GM12878 (cell line): ENCODE measurements at regions of chr6 and their contacts with region 1.

Region 1: DNA sequence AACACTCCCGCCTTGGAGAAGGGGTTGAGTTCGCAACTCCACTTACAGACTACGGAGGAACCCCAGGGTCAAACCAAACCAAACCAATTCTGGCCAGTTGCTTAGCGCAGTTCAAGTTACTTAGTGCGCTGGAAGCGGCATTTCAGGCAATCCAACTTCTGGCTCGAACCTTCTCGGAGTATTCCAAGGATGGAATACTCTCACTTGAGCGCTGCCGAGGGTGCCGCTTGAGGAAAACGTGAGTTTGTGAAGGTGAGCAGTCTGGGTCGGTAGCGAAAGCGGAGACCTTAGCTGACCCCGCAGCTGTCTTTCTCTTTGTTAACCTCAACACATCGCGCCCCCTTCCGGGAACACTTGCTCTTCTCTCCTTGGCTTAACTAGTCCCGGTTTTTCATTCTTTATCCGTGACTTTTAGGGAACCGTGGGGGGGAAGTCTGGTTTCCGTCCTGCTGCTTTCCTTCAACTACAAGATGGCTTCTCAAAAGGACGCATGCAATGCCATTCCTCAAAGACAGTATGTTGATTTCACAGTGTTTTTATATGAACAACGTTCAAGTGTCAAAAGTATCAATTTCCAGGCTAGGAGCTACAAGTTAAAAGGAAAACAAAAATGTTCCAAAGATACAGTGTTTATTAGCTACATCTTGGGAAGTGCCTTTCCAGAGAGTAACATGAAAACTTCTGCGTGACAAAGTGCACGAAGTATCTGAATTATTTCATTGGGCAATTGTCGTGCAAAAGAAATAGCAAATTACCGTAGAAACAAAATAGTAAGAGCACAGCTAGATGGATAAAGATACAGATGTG is 742 bp upstream of the PNISR start:
- DNase-seq: no peak
- ATAC-seq: peak; percentile 57
- H3K4me3 ChIP-seq: peak overlapping the region; percentile 94
- H3K27ac ChIP-seq: peak overlapping the region; percentile 95
- H3K4me1 ChIP-seq: peaks cover 15% of the 10 kb centered on the region
- H3K27me3 ChIP-seq: no peaks in the 10 kb centered on the region
- CTCF ChIP-seq: peak; percentile 44 to 49 (median 48); a peak in 4 of 6 replicates
- EP300 ChIP-seq: peak in 1 of 2 experiments; percentile 13; a peak in 1 of 4 replicates
- POLR2A ChIP-seq: no peak; the same call in 1 of the 2 replicates
- RAD21 ChIP-seq: peak; percentile 53

Region 2: DNA sequence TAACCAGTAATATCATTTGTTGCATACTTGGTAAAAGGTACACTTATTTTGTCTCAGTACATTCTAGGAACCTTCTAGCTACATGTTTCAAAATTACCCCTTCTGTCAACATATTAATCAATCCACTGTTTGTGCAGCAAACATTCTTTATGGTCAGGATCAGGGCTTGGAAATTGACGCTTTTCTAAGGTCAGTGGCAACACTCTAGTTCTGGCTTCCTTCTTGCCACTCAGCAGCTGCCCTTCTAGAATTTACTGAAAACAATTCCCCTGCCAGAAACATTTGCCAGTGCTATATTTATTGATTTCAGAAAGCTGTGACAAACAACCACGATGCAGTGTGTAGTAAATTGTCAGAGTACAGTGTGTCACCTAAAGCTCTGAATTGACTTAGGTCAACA is 393.5 kb before region 1 on chr6:
- CTCF ChIA-PET with region 1: no interaction called
- POLR2A ChIA-PET with region 1: no interaction called
- RAD21 ChIA-PET with region 1: no interaction called
- SMC1A ChIA-PET with region 1: no interaction called
- in situ Hi-C with region 1: no loop called
- intact Hi-C with region 1: no loop called
- DNase-seq: no peak
- ATAC-seq: no peak
- H3K4me3 ChIP-seq: no peak overlapping the region
- H3K27ac ChIP-seq: no peak overlapping the region
- H3K4me1 ChIP-seq: no peaks in the 10 kb centered on the region
- H3K27me3 ChIP-seq: no peaks in the 10 kb centered on the region
- CTCF ChIP-seq: no peak
- EP300 ChIP-seq: no peak
- POLR2A ChIP-seq: no peak
- RAD21 ChIP-seq: no peak

Region 3: DNA sequence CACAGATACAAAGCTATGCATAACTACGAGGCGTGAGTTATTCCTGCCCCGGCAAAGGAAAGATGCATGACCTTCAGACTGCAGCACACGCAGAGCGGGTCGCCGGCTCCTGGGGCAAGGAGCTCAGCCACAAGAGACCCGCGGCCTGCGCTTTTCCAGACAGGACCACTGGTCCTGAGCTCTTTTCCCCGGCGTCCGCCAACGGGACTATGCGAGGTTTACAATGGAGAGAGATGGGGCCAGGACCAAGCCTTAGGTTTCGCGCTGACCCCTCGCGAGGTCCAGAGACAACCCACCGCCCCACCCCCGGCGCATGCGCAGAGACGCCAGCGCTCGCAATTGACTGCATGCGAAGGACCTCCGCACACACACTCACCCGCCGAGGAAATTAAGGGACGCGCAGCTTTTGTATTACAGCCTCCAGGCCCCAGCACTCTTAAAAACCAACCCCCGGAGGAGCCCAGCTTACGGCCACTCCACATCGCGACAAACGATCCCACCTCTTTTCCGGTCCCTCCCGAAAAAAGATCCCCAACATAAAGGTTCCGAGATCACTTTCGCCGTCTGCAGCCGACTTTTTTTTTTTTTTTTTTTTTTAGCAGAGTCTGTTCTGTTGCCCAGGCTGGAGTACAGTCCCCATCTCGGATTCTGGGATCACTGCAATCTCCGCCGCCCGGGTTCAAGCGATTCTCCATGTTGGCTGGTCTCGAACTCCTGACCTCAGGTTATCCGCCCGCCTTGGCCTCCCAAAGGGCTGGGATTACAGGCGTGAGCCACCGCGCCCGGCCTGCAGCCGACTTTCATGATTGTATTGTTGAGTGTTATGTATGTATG is 31.9 kb before region 1 on chr6 and contains the start of gene COQ3:
- CTCF ChIA-PET with region 1: interaction called, 4 read pairs
- POLR2A ChIA-PET with region 1: interaction called, 6 read pairs
- RAD21 ChIA-PET with region 1: interaction called, 5 read pairs
- SMC1A ChIA-PET with region 1: interaction called, 10 read pairs
- in situ Hi-C with region 1: no loop called
- intact Hi-C with region 1: no loop called
- DNase-seq: peak; percentile 33
- ATAC-seq: peak; percentile 90
- H3K4me3 ChIP-seq: peak within 1 kb of the TSS; percentile 80
- H3K27ac ChIP-seq: peak within 1 kb of the TSS; percentile 71
- H3K4me1 ChIP-seq: no peaks in the 10 kb centered on the region
- H3K27me3 ChIP-seq: no peaks in the 10 kb centered on the region
- CTCF ChIP-seq: no peak
- EP300 ChIP-seq: no peak
- POLR2A ChIP-seq: peak; percentile 71
- RAD21 ChIP-seq: 0 out of 2 replicates have a peak, but pooled peaks have one; percentile 9
- polyA plus RNA-seq, gene COQ3: 43.3 to 50.6 TPM

Region 4: DNA sequence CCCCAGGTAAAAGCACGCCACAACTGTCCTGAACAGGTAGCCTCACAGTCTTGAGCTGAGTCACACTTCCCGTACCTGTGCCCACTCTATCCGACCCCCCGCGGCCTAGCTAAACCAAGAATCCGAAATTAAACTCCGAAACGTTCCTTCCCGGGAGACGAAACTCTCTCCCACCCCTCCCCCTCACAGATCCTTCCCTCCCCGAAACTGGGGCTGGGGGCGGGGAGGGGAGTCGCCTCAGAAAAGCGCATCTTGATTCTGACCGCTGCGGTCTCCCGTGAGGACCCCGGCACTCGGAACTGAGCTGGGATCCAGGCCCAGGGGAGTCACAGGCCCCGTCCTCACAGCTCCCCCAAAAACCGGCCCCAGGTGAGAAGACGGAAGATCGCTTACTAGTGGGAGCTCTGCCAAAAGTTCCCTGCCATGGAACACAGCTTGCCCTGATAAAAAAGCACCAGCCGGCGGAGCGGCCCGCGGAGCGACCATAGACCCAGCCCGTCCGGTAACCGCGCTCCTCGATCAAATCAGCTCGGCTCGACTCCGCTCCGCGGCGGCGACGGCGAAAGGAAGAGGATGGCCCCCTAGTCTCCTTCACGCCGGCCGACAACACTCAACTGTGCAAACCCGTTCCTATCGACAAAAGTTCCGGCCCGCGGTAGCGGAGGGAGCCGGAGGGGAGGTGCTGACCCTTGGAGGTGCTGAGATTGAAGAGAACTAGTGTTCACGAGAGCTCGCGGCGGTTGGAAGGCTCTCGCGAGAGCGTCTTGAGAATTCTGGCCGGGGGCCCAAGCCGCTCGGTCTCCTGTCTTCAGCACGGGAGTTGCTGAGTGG is 142.5 kb after region 1 on chr6 and contains the start of gene CCNC:
- CTCF ChIA-PET with region 1: no interaction called
- POLR2A ChIA-PET with region 1: interaction called, 6 read pairs
- RAD21 ChIA-PET with region 1: no interaction called
- SMC1A ChIA-PET with region 1: no interaction called
- in situ Hi-C with region 1: no loop called
- intact Hi-C with region 1: loop called (anchors 2 kb)
- DNase-seq: peak; percentile 76
- ATAC-seq: peak; percentile 96
- H3K4me3 ChIP-seq: peak within 1 kb of the TSS; percentile 88
- H3K27ac ChIP-seq: peak within 1 kb of the TSS; percentile 80
- H3K4me1 ChIP-seq: no peaks in the 10 kb centered on the region; the same call in 1 of the 2 replicates
- H3K27me3 ChIP-seq: no peaks in the 10 kb centered on the region
- CTCF ChIP-seq: no peak
- EP300 ChIP-seq: no peak
- POLR2A ChIP-seq: peak; percentile 96
- RAD21 ChIP-seq: 0 out of 2 replicates have a peak, but pooled peaks have one; percentile 2
- polyA plus RNA-seq, gene CCNC: 82.3 to 168 TPM